Right ventricle myocardium superior (tissue), 1 donor: ENCODE measurements at regions of chr5 and their contacts with region 1.

Region 1: DNA sequence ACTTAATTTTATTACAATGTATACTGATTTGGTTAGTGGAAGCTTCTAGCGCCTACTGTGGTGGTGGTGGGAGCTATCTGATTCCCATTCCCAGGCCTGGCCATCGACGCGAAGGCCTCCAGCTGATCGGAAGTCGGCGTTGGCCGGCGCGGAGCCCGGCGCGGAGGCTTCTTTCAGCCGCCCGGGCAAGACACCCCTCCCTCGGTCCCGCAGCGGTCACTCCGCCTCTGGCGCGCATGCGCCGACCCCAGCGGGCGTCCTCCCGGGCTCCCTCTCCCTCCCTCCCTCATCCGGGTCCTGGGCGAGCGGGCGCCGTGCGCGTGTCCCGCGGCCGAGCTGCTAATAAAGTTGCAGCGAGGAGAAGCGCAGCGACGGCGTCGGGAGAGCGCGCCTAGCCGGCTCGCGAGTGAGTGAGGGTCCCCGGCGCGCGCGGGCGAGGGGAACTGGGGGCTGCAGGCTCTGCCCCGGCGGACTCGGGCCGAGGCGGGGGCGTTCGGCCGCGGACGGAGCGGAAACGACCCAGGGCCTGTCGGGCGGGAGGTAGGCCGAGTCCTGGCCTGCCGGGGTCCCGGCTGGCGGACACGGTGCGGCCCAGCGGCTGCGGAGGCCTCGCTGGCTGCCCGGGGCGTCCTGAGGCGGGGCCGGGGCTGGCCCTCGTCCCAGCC is at the start of gene SMAD5:
- DNase-seq: peak; percentile 97
- ATAC-seq: peak; percentile 100
- total RNA-seq, gene SMAD5: 37.2 TPM

Region 2: GRCh38 chr5:135441350-135441831 is 691.3 kb before region 1 on chr5:
- intact Hi-C with region 1: no loop called
- DNase-seq: no peak
- ATAC-seq: no peak

Region 3: GRCh38 chr5:135843571-135844337 is 288.9 kb before region 1 on chr5:
- intact Hi-C with region 1: no loop called
- DNase-seq: no peak
- ATAC-seq: peak; percentile 15

Region 4: GRCh38 chr5:136058039-136058952 is 74.4 kb before region 1 on chr5:
- intact Hi-C with region 1: no loop called
- DNase-seq: peak; percentile 69
- ATAC-seq: peak; percentile 65

Region 5: GRCh38 chr5:136087961-136088871 is 44.5 kb before region 1 on chr5:
- intact Hi-C with region 1: loop called (anchors 5 kb)
- DNase-seq: peak; percentile 89
- ATAC-seq: peak; percentile 93